HepG2 (cell line): ENCODE measurements at regions of chr16 and their contacts with region 1.

Region 1: GRCh38 chr16:78128913-78129312 is 29.5 kb downstream of the WWOX start:
- DNase-seq: no peak
- ATAC-seq: no peak
- H3K4me3 ChIP-seq: no peak overlapping the region
- H3K27ac ChIP-seq: peak overlapping the region; percentile 8
- H3K4me1 ChIP-seq: peaks cover 58% of the 10 kb centered on the region
- H3K27me3 ChIP-seq: no peaks in the 10 kb centered on the region
- CTCF ChIP-seq: no peak
- EP300 ChIP-seq: no peak
- POLR2A ChIP-seq: no peak
- RAD21 ChIP-seq: no peak

Region 2: DNA sequence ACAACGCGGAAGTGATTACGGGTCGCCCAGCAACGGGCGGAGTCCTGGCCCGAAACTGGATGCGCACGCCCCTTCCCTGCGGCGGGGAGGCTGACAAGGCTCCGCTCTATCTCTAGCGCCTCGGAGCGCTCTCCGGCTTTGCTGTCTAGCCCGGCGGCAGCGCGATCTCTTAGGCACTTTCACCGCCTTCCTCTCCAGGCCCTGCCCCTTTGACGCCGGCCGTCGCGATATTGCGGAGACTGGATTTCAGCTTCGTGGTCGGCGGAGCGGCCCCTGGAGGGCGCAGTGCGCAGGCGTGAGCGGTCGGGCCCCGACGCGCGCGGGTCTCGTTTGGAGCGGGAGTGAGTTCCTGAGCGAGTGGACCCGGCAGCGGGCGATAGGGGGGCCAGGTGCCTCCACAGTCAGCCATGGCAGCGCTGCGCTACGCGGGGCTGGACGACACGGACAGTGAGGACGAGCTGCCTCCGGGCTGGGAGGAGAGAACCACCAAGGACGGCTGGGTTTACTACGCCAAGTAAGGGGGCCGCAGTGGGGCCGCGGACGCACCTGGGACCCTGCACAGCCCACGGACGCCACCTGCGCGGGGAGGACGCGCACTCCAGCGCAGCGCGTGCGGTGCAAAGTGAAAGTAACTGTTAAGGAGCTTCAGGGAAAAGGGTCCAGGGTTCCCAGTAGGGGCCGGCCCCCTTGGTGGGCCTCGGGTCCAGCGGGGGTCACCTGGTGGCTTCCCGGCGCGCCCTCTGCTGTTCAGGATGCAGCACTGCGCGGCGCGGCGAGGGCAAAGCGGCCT is 29.3 kb before region 1 on chr16 and contains the start of gene WWOX:
- CTCF ChIA-PET with region 1: no interaction called
- POLR2A ChIA-PET with region 1: interaction called, 6 read pairs
- in situ Hi-C with region 1: no loop called
- intact Hi-C with region 1: loop called (anchors 1 kb)
- DNase-seq: peak; percentile 96
- ATAC-seq: peak; percentile 95
- H3K4me3 ChIP-seq: peak within 1 kb of the TSS; percentile 70 to 93 (median 92)
- H3K27ac ChIP-seq: peak within 1 kb of the TSS; percentile 90
- H3K4me1 ChIP-seq: peaks cover 54% of the 10 kb centered on the region
- H3K27me3 ChIP-seq: no peaks in the 10 kb centered on the region; a peak in 1 of 5 replicates
- CTCF ChIP-seq: peak; percentile 87
- EP300 ChIP-seq: no peak; a peak in 2 of 4 replicates
- POLR2A ChIP-seq: peak; percentile 86 to 93
- RAD21 ChIP-seq: peak; percentile 78
- total RNA-seq, gene WWOX: 37.4 and 38.4 TPM in 2 replicates